OCI-LY7 (cell line): ENCODE measurements at regions of chr2 and their contacts with region 1.

Region 1: GRCh38 chr2:231128541-231128940 is 3.7 kb upstream of the HTR2B start:
- DNase-seq: no peak
- H3K4me3 ChIP-seq: no peak overlapping the region
- H3K27ac ChIP-seq: no peak overlapping the region
- H3K4me1 ChIP-seq: no peaks in the 10 kb centered on the region
- CTCF ChIP-seq: no peak

Region 2: DNA sequence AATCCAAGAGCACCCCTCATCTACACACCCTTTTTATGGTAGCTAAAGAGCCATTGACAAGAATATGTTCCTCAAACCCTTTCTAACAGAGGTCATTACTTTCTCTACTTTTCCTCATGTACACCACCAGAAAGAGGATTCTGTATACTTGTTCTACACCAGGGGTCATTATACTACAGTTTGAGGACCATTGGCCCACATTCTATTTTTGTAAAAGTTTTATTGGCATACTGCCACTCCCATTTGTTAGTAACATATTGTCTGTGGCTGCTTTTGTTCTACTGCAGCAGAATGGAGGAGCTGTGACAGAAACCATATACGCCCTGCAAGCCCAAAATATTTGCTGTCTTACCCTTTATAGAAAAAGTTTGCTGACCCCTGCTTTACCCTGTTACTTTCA is 18.0 kb before region 1 on chr2:
- CTCF ChIA-PET with region 1: no interaction called
- POLR2A ChIA-PET with region 1: interaction called, 3 read pairs
- intact Hi-C with region 1: loop called (anchors 2 kb)
- DNase-seq: no peak
- H3K4me3 ChIP-seq: no peak overlapping the region
- H3K27ac ChIP-seq: no peak overlapping the region
- H3K4me1 ChIP-seq: no peaks in the 10 kb centered on the region
- CTCF ChIP-seq: no peak

Region 3: DNA sequence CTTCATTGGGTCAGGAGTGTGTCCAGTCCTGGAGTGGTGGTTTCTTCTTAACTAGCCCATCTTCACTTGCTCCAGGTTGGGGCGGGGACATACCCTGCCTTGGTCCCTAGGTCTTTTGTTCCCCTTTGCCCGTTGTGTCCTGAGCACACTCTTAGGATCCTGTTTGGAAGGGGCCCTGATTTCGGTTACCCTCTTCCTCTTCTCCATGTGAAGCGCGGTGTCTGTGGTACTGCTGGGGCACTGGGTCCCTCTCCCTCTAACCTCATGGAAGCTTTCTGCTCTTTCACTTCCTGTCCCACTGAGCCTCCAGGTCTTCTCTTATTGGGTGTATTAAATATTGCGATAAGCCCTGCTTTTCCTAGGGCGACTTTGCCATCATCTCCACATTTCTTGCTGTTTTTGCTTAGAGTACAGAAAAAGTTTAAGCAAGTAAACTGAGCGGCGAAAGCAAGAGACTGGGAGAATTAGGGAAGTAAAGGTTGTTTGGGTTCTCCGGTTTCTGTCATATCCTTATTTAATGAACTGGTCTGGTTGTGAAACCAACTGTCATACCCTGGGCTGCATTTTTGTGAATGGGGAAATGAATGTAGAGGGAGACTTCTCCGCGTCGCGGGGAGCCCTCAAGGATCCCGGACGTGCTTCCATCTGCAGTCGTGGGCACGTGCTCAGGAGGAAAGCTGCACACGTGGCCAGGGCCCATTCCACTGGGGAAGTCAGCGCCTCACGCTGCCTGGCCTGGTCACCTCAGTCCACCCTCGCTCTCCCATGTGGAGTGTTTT is 193.2 kb after region 1 on chr2:
- CTCF ChIA-PET with region 1: no interaction called
- POLR2A ChIA-PET with region 1: no interaction called
- intact Hi-C with region 1: no loop called
- DNase-seq: no peak
- H3K4me3 ChIP-seq: no peak overlapping the region
- H3K27ac ChIP-seq: no peak overlapping the region
- H3K4me1 ChIP-seq: peaks cover under 1% of the 10 kb centered on the region
- CTCF ChIP-seq: no peak

Region 4: DNA sequence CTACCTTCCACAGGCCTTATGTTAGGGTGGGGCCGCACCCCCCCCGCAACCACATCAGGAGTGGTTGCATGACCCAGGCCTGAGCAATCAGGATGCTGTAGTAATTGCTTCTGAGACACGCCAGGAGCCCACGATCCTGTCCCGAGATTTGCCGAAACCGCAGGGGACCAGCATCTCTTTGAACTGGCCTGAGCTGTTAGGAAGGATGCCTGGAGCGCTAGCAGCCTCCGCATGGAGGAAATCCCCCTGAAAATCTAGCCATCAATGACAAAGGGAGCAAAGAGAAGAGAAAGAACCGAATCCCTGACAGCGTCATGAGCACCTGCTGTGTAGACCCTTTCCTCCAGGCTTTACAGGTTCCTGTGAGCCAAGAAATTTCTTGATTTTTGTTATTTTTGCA is 455.4 kb after region 1 on chr2:
- CTCF ChIA-PET with region 1: no interaction called
- POLR2A ChIA-PET with region 1: no interaction called
- intact Hi-C with region 1: no loop called
- DNase-seq: no peak
- H3K4me3 ChIP-seq: no peak overlapping the region
- H3K27ac ChIP-seq: no peak overlapping the region
- H3K4me1 ChIP-seq: no peaks in the 10 kb centered on the region
- CTCF ChIP-seq: no peak